Psoas muscle (tissue), 8 donors: ENCODE measurements at regions of chrX and their contacts with region 1.

Region 1: DNA sequence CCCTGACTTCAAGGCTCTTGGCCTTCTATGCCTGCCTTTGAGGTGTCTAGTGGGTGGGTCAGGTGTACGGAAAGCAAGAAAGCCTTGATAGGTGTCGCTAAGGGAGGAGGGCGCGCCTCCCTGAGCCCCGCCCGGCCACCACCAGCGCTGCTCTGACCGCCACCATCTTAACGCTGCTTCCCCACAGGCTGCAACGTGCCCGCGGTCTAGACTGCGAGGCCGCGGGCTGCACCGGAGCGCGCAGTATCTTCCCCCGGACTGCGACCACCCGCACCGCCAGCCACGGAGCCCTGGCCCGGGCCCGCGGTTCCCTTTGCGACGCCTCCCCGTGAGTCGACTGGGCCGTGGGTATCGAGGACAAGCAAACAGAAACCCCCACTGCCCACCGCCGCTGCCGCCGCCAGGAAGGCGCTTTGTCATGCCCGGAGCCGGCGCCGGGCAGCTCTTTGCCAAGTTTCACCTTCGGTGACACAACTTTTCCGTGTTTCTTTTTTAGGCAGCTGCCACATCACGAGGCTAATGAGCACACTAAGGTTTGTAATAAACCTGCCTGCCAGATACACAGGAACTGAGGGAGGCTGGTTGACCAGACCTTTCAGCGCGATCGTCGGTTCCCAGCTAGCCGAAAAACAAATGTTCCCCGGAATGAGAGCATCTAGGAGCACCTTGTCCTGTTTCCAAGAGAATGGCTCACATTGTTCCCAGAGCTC is 335.8 kb upstream of the F9 start:
- DNase-seq: peak; percentile 54 to 79
- ATAC-seq: peak; percentile 80 to 85 (median 82)
- H3K4me3 ChIP-seq: peak overlapping the region; percentile 61
- H3K27ac ChIP-seq: peak overlapping the region; percentile 84
- H3K4me1 ChIP-seq: peaks cover 3% of the 10 kb centered on the region
- H3K27me3 ChIP-seq: peaks cover 0 to 10% (median 0%) of the 10 kb centered on the region in 3 donors
- CTCF ChIP-seq: no peak

Region 2: DNA sequence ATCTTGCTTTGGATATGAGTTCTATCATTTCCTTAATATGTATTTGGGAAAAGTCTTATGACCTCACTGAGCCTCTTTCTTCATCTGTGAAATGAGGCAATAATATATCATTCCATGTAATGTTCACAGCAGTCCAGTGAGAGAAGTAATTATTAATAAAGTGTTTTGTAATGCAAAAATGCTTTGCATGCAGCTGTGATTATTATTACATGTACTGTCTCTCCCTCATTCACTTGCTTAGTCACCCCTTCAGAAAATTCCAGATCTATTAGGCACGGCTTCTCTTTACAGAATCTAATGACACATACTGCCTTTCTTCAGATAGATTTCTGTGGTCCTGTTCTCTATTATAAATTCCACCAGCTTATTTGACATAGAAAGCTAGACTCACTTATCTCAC is 429.7 kb before region 1 on chrX:
- intact Hi-C with region 1: loop called in 1 of 2 experiments (anchors 10 kb)
- DNase-seq: no peak
- ATAC-seq: peak; percentile 77 to 87 (median 86)
- H3K4me3 ChIP-seq: no peak overlapping the region
- H3K27ac ChIP-seq: no peak overlapping the region
- H3K4me1 ChIP-seq: peaks cover 10% of the 10 kb centered on the region
- H3K27me3 ChIP-seq: no peaks in the 10 kb centered on the region
- CTCF ChIP-seq: no peak

Region 3: DNA sequence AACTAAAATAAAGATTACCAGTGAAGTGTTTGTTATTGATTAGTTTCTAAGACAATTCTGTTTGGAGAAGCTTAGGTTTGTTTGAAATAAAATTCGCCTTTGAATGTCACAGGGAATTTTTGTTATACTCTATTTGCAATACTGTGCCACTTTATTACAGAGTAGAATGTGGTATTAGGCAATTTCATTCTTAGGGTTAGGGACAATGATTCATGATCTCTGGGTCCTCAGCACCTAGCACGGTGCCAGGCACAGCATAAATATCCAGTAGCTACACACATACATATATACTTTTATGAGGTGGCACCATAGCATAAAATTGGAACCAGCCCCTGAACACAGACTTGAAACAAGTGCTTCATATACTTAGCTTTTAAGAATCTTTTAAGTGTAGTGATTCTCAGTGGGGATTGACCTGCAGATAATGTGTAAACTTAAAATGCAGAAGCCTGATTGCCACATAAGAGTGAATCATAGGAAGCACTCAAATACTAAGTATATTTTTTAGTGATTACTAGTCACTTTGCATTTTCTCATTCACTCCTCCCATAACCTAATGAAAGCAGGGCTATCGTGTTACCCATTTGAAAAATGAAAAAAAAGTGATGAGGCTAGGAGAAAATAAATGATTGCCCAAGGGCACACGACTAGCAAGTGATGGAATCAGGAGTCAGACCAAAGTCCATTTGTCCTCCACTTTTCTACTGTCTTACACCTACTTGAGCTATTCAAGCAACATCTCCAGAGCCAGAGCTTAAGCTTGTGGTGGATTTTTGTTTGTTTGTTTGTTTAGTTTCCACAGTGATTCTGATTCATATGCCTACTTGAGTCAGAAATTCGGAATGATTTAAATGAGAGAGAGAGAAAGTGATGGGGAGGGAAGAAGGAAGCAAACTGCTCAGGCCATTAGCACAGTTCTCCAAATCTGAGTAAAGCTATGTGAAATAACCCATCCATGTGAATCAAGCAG is 117.2 kb before region 1 on chrX:
- intact Hi-C with region 1: no loop called
- DNase-seq: no peak
- ATAC-seq: peak in 3 of 4 donors; percentile 60 to 74 (median 65)
- H3K4me3 ChIP-seq: no peak overlapping the region
- H3K27ac ChIP-seq: no peak overlapping the region
- H3K4me1 ChIP-seq: no peaks in the 10 kb centered on the region
- H3K27me3 ChIP-seq: no peaks in the 10 kb centered on the region
- CTCF ChIP-seq: no peak

Region 4: DNA sequence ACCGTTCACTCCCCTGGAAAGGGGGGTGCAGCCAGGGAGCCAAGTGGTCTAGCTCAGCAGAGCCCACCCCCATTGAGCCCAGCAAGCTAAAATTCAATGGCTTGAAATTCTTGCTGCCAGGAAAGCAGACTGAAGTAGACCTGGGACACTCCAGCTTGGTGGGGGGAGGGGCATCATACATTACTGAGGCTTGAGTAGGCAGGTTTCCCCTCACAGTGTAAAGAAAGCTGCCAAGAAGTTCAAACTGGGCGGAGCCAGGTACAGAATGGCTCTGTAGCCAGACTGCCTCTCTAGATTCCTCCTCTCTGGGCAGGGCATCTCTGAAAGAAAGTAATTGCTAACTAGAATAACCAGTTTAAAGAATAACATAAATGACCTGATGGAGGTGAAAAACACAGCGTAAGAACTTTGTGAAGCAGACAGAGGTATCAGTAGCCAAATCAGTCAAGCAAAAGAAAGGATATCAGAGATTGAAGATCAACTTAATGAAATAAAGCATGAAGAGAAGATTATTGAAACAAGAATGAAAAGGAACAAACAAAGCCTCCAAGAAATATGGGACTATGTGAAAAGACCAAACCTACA is 36.4 kb before region 1 on chrX:
- intact Hi-C with region 1: no loop called
- DNase-seq: no peak
- ATAC-seq: peak in 1 of 4 donors; percentile 57
- H3K4me3 ChIP-seq: no peak overlapping the region
- H3K27ac ChIP-seq: no peak overlapping the region
- H3K4me1 ChIP-seq: no peaks in the 10 kb centered on the region
- H3K27me3 ChIP-seq: peaks cover 0 to 4% (median 0%) of the 10 kb centered on the region in 3 donors
- CTCF ChIP-seq: no peak